CD8-positive, alpha-beta T cell (primary cell): ENCODE measurements at regions of chr19 and their contacts with region 1.

Region 1: GRCh38 chr19:47256688-47257443 is 541 bp downstream of the CCDC9 start:
- DNase-seq: peak; percentile 96 to 100 (median 98)
- ATAC-seq: peak; percentile 80
- H3K4me3 ChIP-seq: peak overlapping the region; percentile 65 to 70
- H3K4me3 Mint-ChIP-seq: peak overlapping the region; percentile 92
- H3K27ac ChIP-seq: peak overlapping the region; percentile 76 to 98
- H3K27ac Mint-ChIP-seq: peak overlapping the region; percentile 97
- H3K4me1 ChIP-seq: peaks cover 23% of the 10 kb centered on the region
- H3K4me1 Mint-ChIP-seq: peaks cover 35% of the 10 kb centered on the region
- H3K27me3 ChIP-seq: no peaks in the 10 kb centered on the region
- H3K27me3 Mint-ChIP-seq: no peaks in the 10 kb centered on the region
- CTCF ChIP-seq: no peak

Region 2: DNA sequence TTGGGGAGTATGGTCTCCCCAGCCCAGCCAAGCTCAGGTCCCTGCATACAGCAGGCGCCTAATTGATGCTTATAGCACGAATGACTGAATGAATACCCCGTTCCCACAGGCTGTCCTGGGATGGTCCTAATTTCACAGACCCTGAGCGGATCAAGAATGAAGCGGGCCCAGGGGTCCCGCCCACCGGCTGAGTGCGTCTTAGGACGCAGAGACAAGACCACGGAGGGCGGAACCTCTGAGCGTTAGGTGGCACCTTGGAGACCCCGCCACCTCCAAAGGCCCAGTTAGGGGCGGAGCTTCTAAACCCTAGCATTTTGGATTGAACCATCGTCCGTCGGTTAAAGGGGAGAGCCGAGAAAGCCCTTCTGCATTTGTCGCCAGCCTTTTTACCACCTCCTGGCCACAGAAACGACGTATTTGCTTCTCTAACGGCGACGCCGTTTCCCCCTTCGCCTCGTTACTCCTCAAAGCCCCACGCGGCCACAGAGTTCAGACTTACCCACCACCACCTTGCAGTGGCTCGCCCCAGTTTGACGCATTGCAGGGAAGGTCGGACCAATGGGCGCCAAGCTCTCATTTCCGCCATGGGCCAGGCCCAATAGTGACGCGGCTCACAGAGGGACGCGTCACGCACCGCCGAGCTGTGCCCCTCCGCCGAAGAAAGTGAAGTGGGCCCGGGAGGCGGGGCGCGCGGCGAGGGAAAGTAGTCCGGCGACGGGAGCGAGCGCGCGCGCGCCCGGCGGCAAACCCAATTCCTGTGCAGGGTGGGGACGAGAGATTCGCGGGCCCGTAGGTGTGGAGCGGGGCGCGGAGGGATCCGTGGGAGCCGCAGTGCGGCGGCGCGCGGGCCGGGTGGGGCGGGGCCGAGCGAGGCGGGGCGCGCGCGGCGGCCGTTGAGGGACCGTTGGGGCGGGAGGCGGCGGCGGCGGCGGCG is 656.2 kb before region 1 on chr19:
- CTCF ChIA-PET with region 1: no interaction called
- POLR2A ChIA-PET with region 1: interaction called, 4 read pairs
- intact Hi-C with region 1: loop called in 1 of 2 experiments (anchors 5 kb)
- DNase-seq: peak; percentile 95 to 99 (median 97)
- ATAC-seq: peak; percentile 89
- H3K4me3 ChIP-seq: peak overlapping the region; percentile 88 to 99
- H3K4me3 Mint-ChIP-seq: peak overlapping the region; percentile 96
- H3K27ac ChIP-seq: peak overlapping the region; percentile 100
- H3K27ac Mint-ChIP-seq: peak overlapping the region; percentile 100
- H3K4me1 ChIP-seq: peaks cover 34% of the 10 kb centered on the region
- H3K4me1 Mint-ChIP-seq: peaks cover 38% of the 10 kb centered on the region
- H3K27me3 ChIP-seq: no peaks in the 10 kb centered on the region
- H3K27me3 Mint-ChIP-seq: no peaks in the 10 kb centered on the region
- CTCF ChIP-seq: no peak

Region 3: GRCh38 chr19:46717034-46717723 is 539.7 kb before region 1 on chr19 and contains the start of gene PRKD2:
- CTCF ChIA-PET with region 1: no interaction called
- POLR2A ChIA-PET with region 1: no interaction called
- intact Hi-C with region 1: loop called in 1 of 2 experiments (anchors 5 kb)
- DNase-seq: peak; percentile 60 to 91 (median 86)
- ATAC-seq: peak; percentile 51
- H3K4me3 ChIP-seq: peak within 1 kb of the TSS; percentile 71 to 73
- H3K4me3 Mint-ChIP-seq: peak within 1 kb of the TSS; percentile 92
- H3K27ac ChIP-seq: peak within 1 kb of the TSS; percentile 77 to 94
- H3K27ac Mint-ChIP-seq: peak within 1 kb of the TSS; percentile 99
- H3K4me1 ChIP-seq: peaks cover 37% of the 10 kb centered on the region
- H3K4me1 Mint-ChIP-seq: peaks cover 45% of the 10 kb centered on the region
- H3K27me3 ChIP-seq: no peaks in the 10 kb centered on the region
- H3K27me3 Mint-ChIP-seq: no peaks in the 10 kb centered on the region
- CTCF ChIP-seq: no peak
- total RNA-seq, gene PRKD2: 81.1 to 89.7 TPM

Region 4: DNA sequence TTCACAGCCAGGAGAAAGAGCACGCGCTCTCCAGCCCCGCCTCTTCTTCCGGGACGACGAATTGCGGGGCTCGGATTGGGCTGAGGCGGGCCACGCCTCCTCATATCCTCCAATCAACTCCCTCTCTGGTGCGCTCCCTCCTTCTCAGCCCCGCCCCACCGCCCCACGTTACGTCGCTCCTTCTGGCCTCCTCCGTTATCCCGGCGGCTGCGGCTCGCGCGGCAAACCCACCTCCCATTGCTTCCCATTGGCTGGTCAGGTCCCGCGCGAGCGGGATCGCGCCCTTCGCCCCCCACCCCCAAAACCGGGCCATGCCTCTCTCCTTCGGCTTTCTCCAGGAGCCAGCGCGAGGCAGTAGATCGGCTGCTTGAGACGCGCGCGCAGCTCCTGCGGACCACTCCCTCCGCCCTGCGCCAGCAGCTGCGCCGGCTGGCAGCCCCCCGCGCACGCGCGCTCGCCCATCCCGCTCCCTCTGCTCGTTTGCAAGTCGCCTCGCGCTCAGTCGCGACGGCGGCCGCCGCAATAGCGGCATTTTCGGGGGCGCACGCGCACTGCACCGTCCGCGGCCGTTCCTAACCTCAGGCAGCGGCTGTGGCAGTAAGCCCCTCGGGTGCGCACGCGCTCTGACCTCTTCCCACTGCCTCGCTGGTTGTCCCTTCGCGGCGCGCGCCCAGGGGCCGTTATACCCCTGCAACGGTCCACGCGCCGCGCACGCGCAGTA is 396.6 kb before region 1 on chr19:
- CTCF ChIA-PET with region 1: no interaction called
- POLR2A ChIA-PET with region 1: no interaction called
- intact Hi-C with region 1: loop called in 1 of 2 experiments (anchors 5 kb)
- DNase-seq: peak; percentile 82 to 98 (median 93)
- ATAC-seq: peak; percentile 80
- H3K4me3 ChIP-seq: peak overlapping the region; percentile 84 to 91
- H3K4me3 Mint-ChIP-seq: peak overlapping the region; percentile 92
- H3K27ac ChIP-seq: peak overlapping the region; percentile 77 to 87
- H3K27ac Mint-ChIP-seq: peak overlapping the region; percentile 94
- H3K4me1 ChIP-seq: peaks cover 44% of the 10 kb centered on the region
- H3K4me1 Mint-ChIP-seq: peaks cover 17% of the 10 kb centered on the region
- H3K27me3 ChIP-seq: no peaks in the 10 kb centered on the region
- H3K27me3 Mint-ChIP-seq: no peaks in the 10 kb centered on the region
- CTCF ChIP-seq: no peak

Region 5: GRCh38 chr19:47157431-47158321 is 99.2 kb before region 1 on chr19:
- CTCF ChIA-PET with region 1: interaction called, 505 read pairs
- POLR2A ChIA-PET with region 1: interaction called, 18 read pairs
- intact Hi-C with region 1: no loop called
- DNase-seq: peak in 6 of 9 experiments; percentile 37 to 80 (median 64)
- ATAC-seq: peak; percentile 22
- H3K4me3 ChIP-seq: peak overlapping the region; percentile 14 to 42
- H3K4me3 Mint-ChIP-seq: peak overlapping the region; percentile 74
- H3K27ac ChIP-seq: peak overlapping the region; percentile 41 to 48
- H3K27ac Mint-ChIP-seq: peak overlapping the region; percentile 95
- H3K4me1 ChIP-seq: peaks cover 61% of the 10 kb centered on the region
- H3K4me1 Mint-ChIP-seq: peaks cover 73% of the 10 kb centered on the region
- H3K27me3 ChIP-seq: no peaks in the 10 kb centered on the region
- H3K27me3 Mint-ChIP-seq: no peaks in the 10 kb centered on the region
- CTCF ChIP-seq: no peak

Region 6: GRCh38 chr19:47231215-47231984 is 25.5 kb before region 1 on chr19:
- CTCF ChIA-PET with region 1: no interaction called
- POLR2A ChIA-PET with region 1: interaction called, 15 read pairs
- intact Hi-C with region 1: loop called (anchors 1 kb)
- DNase-seq: peak; percentile 80 to 95 (median 93)
- ATAC-seq: peak; percentile 54
- H3K4me3 ChIP-seq: peak overlapping the region; percentile 59 to 66
- H3K4me3 Mint-ChIP-seq: peak overlapping the region; percentile 79
- H3K27ac ChIP-seq: peak overlapping the region; percentile 45 to 83
- H3K27ac Mint-ChIP-seq: peak overlapping the region; percentile 88
- H3K4me1 ChIP-seq: peaks cover 42% of the 10 kb centered on the region
- H3K4me1 Mint-ChIP-seq: peaks cover 28% of the 10 kb centered on the region
- H3K27me3 ChIP-seq: no peaks in the 10 kb centered on the region
- H3K27me3 Mint-ChIP-seq: no peaks in the 10 kb centered on the region
- CTCF ChIP-seq: no peak